ENCODE measurements at regions of chr9 and their contacts with region 1.

Region 1: GRCh38 chr9:134698587-134699342 is 57.2 kb downstream of the COL5A1 start:
- DNase-seq: peak; percentile 75
- H3K4me3 Mint-ChIP-seq: no peak overlapping the region
- H3K27ac Mint-ChIP-seq: no peak overlapping the region
- H3K4me1 Mint-ChIP-seq: no peaks in the 10 kb centered on the region
- H3K27me3 Mint-ChIP-seq: no peaks in the 10 kb centered on the region

Region 2: GRCh38 chr9:134738869-134739659 is 40.3 kb after region 1 on chr9:
- CTCF ChIA-PET with region 1: interaction called, 4 read pairs
- intact Hi-C with region 1: loop called (anchors 2 kb)
- DNase-seq: peak; percentile 41
- H3K4me3 Mint-ChIP-seq: no peak overlapping the region
- H3K27ac Mint-ChIP-seq: no peak overlapping the region
- H3K4me1 Mint-ChIP-seq: no peaks in the 10 kb centered on the region
- H3K27me3 Mint-ChIP-seq: no peaks in the 10 kb centered on the region

Region 3: DNA sequence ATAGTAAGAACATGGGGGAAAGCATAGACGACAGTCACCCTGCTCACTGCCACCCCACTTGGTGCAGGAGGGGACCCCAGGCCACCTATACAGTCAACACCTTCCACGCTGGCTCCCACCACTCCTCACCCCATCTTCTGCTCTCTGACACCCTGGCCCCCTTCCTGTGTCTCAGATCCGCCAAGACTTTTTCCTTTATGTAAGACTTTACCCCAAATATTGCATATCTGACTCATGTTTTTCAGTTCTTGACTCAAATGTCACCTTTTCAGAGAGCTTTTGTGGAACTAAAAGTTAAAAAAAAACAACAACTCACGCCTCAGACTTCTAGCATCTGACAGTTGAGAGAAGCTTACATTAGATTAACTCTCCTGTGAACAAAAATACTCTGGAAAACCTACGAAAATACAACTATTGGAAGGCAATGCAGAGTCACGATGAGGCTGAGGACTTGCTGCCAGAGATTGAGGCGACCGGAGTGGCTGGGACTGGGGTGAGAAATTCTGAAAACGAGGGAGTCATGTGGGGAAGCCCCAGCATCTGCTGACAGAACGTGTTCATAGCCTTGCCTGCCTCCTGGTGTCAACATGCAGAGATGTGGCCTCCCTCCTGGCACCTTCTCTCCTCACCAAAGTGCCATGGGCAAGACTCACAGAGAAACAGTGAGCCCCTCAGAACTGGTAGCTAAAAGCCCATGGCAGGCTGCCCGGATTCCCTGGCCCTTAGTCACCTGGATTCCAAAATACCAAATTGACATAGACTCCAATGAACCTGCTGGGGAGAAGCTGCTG is 159.5 kb after region 1 on chr9:
- CTCF ChIA-PET with region 1: interaction called, 4 read pairs
- intact Hi-C with region 1: loop called (anchors 2 kb)
- DNase-seq: peak; percentile 75
- H3K4me3 Mint-ChIP-seq: no peak overlapping the region
- H3K27ac Mint-ChIP-seq: peak overlapping the region; percentile 67
- H3K4me1 Mint-ChIP-seq: peaks cover 11% of the 10 kb centered on the region
- H3K27me3 Mint-ChIP-seq: peaks cover 19% of the 10 kb centered on the region

Measured in activated naive CD4-positive, alpha-beta T cell treated with anti-CD3 and anti-CD28 coated beads for 36 hours (primary cell).